Posterior vena cava (tissue), 2 donors: ENCODE measurements at regions of chr19 and their contacts with region 1.

Region 1: GRCh38 chr19:46860125-46860845 is 512 bp upstream of the ARHGAP35 start:
- DNase-seq: peak; percentile 99

Region 2: DNA sequence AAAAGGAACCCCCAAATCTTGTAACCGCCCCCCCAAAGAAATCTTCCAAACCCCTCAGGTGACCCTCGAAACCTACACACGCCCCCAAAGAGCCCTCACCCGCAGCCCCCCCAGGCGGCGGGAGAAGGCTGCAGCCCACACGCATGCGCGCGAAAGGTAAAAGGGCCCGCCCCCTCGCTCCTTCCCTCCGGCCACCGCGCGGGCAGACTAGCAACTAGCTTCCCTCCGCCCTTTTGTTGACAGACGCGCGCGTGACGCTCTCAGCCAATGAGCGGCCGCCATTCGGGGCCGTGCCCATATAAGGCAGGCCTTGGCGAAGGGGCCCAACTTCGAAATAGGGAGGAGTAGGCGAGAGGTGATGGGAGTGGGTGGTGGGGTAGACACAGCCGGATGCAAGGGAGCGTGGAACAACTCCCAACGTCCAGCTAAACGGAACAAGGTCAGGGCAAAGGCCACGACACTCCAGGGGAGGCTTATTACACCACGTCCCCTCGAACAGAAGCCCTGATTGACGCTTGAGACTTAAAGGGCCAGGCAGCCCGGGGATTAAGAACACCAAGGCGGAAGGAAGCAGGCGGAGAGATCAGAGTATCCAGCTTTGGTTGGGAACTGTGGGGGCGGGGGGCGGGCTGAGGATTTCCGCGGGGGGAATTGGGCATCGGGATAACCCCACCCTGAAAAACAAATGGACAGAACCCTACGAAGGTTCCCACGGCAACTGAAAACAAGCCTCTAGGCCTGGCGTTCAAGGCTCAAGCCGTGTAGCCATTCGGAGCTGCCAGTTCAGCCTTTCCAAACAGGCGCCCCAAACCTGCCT is 1142.9 kb before region 1 on chr19:
- intact Hi-C with region 1: no loop called
- DNase-seq: peak; percentile 100

Region 3: DNA sequence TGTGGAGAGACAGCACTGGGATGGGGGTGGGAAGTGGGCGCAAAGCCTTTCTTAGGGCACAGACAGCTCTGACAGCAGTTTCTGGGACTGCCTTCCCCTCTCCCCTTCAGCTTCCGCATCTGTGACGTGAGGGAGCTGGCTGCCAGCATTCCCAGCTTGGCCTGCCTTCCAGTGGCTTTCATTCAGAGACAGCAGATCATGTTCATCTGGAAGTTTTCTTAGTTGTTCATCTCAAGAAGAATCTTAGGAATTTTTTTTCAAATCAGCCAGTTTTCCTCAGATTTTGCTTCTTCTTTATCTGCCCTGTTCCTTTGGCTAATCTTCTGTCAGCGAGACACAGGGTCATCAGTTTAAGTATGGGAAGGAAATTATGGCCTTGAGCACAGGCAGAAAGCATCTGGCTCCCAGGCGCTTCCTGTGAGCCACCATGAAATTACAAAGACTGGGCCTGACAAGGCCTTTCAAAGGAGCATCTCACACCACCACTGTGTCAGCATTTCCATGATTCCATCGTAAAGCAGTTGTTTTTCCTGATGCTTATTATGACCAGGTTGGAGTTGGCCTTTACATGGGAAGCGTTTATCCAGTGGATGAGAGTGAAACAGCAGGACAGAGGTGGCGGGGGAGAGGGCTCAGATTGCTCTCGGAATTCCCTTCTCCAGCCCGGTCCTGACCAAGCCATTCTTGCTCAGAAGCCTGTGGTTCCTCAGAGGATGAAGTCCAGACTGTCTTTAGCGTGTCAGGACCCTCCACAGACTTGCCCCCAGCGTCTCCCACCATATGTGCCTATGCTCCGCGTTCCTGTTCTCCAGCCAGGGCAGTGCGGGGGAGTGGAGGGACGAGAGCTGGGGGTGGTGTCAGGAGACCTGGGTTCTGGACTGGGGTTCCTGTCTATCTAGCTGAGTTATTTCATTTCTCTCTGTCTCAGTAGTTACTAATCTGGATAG is 44.1 kb after region 1 on chr19:
- intact Hi-C with region 1: no loop called
- DNase-seq: no peak

Region 4: DNA sequence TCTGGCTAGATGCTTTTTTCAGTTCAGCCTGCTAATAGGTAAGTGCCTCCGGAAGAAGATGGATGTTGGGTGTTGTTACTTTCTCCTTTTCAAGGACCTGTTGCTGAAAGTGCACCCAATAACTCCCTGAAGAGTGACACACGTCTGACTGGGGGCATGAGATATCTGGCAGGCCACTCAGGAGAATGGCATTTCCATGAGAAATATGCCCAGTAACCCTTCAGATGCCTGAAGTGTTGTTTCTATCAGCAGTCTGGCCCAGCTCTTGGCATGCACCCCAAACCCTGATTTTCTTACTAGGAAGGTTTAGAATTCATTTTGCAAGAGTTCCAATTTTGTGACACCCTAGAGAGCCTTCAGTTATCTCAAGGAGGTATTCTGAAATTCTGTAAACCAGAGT is 72.1 kb after region 1 on chr19:
- intact Hi-C with region 1: loop called in 1 of 2 experiments (anchors 10 kb)
- DNase-seq: no peak

Region 5: DNA sequence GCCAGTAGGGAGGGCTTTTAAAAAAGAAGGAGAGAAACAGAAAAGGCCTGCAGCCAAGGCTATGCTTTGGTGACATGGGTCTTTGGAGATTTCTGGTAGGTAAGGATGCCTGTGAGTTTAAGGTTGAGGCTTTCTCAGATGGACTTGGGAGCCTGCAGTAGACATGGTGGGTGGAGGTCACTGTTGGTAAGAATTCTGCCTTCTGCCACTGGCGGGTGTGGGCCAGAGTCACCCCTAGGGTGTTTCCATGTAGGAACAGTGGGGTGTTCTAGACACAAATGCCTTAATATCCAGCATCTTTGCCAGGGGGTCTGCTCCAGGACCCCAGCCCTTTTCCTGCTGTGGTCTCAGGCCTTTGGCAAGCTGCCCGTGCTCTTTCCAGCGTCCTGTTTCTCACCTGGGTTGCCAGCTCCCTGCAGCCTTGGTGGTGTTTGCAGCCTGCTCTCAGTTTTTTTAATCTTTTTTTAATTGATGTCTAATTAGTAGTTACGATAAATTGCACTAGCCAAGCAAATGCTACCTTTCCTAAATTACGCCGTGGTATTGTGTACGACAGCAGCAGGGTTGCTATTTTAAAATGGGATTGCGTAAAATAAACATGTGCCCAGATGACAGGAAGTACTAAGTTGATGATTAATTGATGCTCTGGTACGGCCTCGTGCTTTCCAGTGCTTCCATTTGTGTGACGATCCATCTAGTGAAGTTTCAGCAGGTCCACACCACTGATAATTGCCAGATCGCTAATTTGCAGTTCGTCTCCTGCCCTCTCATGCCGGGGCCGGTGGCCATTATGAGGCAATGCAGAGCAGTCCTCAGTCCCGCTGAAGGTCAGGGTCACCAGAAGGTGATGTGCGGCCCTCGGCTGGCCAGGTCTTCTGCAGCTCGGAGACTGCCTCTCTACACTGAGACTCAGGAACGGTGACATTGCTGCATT is 124.1 kb after region 1 on chr19:
- intact Hi-C with region 1: loop called in 1 of 2 experiments (anchors 2 kb)
- DNase-seq: no peak

Region 6: DNA sequence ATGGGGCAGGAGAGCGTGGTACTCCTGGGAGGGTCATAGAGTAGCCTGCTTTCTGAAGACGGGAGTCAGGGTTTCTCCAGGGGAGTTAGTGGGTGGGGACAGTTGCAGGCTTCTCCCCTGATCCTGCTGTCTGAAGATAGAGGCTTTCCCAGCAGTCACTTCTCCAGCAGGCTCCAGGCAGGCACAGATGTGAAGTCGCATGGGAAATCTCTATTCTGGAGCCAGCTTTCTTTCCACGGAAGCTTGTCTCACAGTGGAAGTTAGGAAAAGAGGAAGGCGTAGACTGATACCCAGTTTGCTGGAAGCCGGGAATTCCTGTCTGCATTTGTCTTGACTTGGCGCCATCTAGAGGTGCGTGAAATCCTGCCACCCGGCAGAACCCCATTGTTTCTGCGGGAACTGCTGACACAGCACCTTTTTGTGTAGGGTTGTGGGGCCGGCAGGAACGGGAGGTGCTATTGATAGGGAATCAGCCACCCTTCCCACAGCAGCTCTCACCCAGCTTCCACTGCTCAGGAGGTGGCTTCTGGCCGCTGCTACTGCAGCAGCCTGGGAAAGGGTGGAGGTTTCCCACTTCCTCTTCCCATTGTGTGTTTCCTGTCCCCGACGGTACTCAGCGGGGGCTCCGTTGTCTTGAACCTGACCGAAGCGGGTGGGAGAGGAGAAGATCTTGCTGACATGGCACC is 130.8 kb after region 1 on chr19:
- intact Hi-C with region 1: loop called (anchors 5 kb)
- DNase-seq: peak; percentile 92